Naive thymus-derived CD4-positive, alpha-beta T cell (primary cell): ENCODE measurements at regions of chr15 and their contacts with region 1.

Region 1: GRCh38 chr15:91022075-91022835 is at the start of gene VPS33B:
- DNase-seq: peak; percentile 37 to 78 (median 76)
- ATAC-seq: peak; percentile 91
- H3K4me3 ChIP-seq: peak within 1 kb of the TSS; percentile 100
- H3K4me3 Mint-ChIP-seq: peak within 1 kb of the TSS; percentile 87 to 99 (median 96)
- H3K27ac ChIP-seq: peak within 1 kb of the TSS; percentile 82
- H3K27ac Mint-ChIP-seq: peak within 1 kb of the TSS; percentile 79 to 96 (median 94)
- H3K4me1 ChIP-seq: peaks cover 5 to 15% of the 10 kb centered on the region in 2 donors
- H3K4me1 Mint-ChIP-seq: peaks cover 38 to 56% (median 47%) of the 10 kb centered on the region in 7 donors
- H3K27me3 ChIP-seq: no peaks in the 10 kb centered on the region
- H3K27me3 Mint-ChIP-seq: no peaks in the 10 kb centered on the region
- total RNA-seq, gene VPS33B: 15.8 to 28.1 (median 25.7) TPM

Region 2: DNA sequence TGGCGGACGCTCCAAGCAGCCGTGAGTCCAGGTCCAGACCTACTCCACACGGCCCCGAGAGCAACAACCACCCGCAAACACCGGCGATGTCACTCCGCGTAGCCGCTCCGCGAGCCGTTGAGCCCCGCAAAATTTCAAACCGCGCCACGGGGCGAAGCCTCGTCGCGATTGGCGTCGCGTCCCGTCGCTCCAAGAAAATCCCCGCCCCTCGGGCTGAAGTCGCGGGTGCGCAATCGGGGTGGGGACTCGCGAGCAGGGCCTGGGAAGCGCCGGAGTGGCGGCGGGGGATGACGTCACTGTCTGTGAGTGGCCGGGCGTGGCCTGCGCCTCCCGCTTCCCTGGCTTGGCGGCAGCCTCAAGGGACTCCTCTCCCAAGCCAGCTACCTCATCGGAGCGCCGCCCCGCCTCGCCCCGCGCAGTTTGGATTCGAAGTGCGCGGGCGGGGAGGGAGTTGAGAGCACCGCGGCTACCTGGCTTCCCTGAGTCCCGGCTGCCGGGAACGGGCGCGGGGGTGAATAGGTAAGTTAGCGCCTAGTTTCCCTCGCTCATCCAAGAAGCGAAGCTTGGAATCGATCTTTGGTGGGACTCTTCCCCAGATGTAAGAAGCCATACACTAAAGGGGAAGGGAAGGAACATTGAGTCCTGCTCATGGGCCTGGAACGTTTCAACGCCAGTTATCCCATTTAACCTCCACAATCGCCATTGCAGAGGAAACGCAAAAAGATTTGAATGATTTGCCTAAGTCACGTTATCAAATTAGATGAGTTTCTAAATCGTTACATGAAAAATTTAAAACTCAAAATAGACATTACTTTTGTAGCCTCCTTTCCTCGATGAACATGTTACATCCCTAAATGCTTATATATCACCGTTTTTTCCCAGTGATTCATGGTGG is 27.6 kb before region 1 on chr15 and contains the start of gene PRC1:
- CTCF ChIA-PET with region 1: no interaction called
- POLR2A ChIA-PET with region 1: interaction called, 4 read pairs
- intact Hi-C with region 1: loop called (anchors 1 kb)
- DNase-seq: peak; percentile 95 to 99 (median 95)
- ATAC-seq: peak; percentile 99
- H3K4me3 ChIP-seq: peak within 1 kb of the TSS; percentile 70
- H3K4me3 Mint-ChIP-seq: peak within 1 kb of the TSS; percentile 96 to 99 (median 98)
- H3K27ac ChIP-seq: peak within 1 kb of the TSS; percentile 86
- H3K27ac Mint-ChIP-seq: peak within 1 kb of the TSS; percentile 88 to 100 (median 97)
- H3K4me1 ChIP-seq: peaks cover 9 to 14% of the 10 kb centered on the region in 2 donors
- H3K4me1 Mint-ChIP-seq: peaks cover 3 to 43% (median 16%) of the 10 kb centered on the region in 7 donors
- H3K27me3 ChIP-seq: no peaks in the 10 kb centered on the region
- H3K27me3 Mint-ChIP-seq: no peaks in the 10 kb centered on the region
- total RNA-seq, gene PRC1: 2.6 to 98.9 (median 19.4) TPM

Region 3: DNA sequence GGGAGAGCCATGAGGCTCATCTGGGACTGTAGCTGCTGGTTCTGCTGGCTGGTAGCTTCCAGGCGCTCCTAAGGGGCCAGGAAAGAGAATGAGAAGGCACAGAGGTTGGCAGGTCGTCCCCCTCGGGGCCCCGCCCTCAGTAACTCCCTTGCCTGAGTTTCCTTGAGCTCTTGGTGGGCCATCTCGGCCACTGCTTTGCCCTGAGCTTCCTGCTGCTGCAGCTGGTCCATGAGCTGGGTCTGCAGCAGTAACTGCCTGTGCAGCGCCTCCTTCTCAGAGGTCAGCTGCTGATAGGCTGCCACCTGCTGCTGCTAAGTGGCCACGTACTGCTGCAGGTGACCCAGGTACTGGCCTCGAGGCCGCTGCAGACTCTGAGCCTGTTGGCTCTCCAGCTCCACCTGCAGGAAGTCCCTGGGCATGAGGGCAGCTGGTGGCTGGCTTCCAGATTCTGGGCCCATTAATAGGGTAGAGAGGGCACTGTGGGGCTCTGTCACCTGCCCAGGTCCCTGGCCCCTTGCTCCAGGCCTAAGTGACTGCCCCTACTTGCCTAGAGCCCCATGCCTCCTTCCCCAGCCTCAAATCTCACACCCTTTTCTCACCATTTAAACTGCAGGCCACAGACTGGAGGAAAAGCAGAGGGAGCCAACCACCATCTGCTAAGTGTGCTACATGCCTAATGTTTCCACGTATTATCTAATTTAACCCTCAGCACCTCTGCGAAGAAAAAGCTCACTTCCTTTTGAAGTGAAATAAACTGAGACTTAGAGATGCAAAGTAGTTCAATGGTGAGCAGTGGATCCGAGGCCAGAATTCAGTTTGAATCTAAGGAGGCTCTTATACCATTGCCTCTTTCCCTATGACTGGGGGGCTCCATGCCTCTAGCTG is 10.9 kb after region 1 on chr15:
- CTCF ChIA-PET with region 1: no interaction called
- POLR2A ChIA-PET with region 1: interaction called, 3 read pairs
- intact Hi-C with region 1: loop called in 1 of 2 experiments (anchors 1 kb)
- DNase-seq: peak in 8 of 9 donors; percentile 26 to 61 (median 36)
- ATAC-seq: peak; percentile 65
- H3K4me3 ChIP-seq: no peak overlapping the region
- H3K4me3 Mint-ChIP-seq: no peak overlapping the region
- H3K27ac ChIP-seq: no peak overlapping the region
- H3K27ac Mint-ChIP-seq: peak overlapping the region in 1 of 9 donors; percentile 67
- H3K4me1 ChIP-seq: no peaks in the 10 kb centered on the region
- H3K4me1 Mint-ChIP-seq: peaks cover 0 to 12% (median 4%) of the 10 kb centered on the region in 7 donors
- H3K27me3 ChIP-seq: no peaks in the 10 kb centered on the region
- H3K27me3 Mint-ChIP-seq: peaks cover 0 to 20% (median 0%) of the 10 kb centered on the region in 5 donors